ENCODE measurements at regions of chr1 and their contacts with region 1.

Region 1: DNA sequence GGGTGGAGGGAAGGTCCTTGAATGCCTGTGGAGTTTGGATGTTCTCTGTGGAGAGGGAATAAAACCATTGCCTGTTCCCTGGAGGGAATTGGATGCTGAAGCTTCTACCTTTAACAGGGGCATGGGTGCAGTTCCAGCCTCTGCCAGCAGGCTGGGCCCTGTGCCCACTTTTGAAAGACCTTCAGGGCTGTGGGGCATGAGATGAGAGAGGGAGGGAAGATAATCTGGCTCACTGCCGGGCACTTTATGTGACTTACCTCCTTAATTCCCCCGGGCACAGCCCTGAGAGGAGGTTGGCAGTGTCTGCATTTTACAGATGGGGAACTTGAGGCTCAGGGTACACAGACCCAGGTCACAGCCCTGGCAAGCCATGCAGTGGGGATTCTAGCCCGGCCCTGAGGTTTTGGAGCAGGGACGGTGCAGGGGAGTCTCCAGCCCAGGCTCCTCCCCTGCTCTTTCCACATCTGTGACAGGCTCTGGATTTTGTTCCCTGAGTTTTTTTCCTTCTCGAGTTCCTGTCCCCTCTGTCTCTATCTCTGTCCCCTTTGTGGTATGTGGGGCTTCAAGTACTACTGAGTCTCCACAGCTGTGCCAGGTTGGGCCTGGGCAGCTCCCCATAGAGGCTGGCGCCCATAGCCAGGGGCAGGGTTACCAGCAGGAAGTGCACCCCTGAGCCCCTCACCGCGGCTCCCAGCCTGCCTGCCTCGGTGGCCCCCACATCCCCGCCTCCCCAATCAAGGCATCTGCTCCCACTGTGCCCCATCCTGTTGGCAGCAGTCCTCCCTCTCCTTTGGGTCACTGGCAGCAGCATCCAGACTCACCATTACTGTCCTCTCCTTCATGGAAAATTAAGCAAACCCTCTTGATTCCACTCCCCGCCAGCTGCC is 14.0 kb upstream of the THEMIS2 start:
- DNase-seq: peak; percentile 69
- ATAC-seq: peak; percentile 86
- H3K4me3 ChIP-seq: peak overlapping the region; percentile 5 to 70 (median 42)
- H3K27ac ChIP-seq: no peak overlapping the region
- H3K4me1 ChIP-seq: peaks cover 35% of the 10 kb centered on the region
- H3K27me3 ChIP-seq: peaks cover 0 to 3% of the 10 kb centered on the region in 2 experiments; a peak in 1 of 5 replicates
- CTCF ChIP-seq: peak; percentile 96
- EP300 ChIP-seq: no peak; a peak in 1 of 4 replicates
- POLR2A ChIP-seq: no peak
- RAD21 ChIP-seq: peak; percentile 86

Region 2: DNA sequence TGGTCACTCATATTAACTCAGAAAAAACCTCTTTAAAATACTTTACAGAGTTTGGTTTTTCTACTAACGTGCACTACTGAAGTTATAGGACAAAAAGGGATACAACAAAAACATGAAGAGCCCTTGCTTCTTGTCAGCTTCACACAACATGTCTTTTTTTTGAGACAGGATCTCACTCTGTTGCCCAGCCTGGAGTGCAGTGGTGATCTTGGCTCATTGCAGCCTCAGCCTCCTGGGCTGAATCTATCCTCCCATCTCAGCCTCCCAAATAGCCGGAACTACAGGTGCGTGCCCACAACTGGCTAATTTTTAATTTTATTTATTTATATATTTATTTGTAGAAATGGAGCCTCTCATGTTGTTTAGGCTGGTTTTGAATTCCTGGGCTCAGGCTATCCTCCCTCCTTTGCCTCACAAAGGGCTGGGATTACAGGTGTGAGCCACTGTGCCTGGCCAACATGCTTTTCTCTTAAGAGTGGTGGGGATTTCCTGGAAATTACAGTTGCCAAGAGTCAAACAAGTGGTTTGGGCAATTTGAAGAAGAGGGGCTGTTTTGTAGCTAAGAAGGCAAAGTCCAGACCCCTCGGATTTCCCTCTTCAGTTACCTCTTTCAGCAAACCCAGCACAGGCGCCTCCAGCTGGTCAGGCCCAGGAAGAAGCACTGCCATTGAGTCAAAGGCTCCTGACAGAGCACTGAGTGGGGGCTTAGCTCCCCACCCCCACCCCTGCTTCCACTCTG is 70.1 kb after region 1 on chr1:
- CTCF ChIA-PET with region 1: no interaction called
- POLR2A ChIA-PET with region 1: no interaction called
- in situ Hi-C with region 1: loop called (anchors 10 kb)
- intact Hi-C with region 1: loop called (anchors 10 kb)
- DNase-seq: peak; percentile 37
- ATAC-seq: peak; percentile 31; the same call in 1 of the 3 replicates
- H3K4me3 ChIP-seq: peak overlapping the region in 1 of 3 experiments; percentile 16; a peak in 1 of 6 replicates
- H3K27ac ChIP-seq: no peak overlapping the region
- H3K4me1 ChIP-seq: peaks cover 20% of the 10 kb centered on the region
- H3K27me3 ChIP-seq: no peaks in the 10 kb centered on the region
- CTCF ChIP-seq: peak; percentile 58
- EP300 ChIP-seq: no peak
- POLR2A ChIP-seq: no peak
- RAD21 ChIP-seq: no peak

Region 3: DNA sequence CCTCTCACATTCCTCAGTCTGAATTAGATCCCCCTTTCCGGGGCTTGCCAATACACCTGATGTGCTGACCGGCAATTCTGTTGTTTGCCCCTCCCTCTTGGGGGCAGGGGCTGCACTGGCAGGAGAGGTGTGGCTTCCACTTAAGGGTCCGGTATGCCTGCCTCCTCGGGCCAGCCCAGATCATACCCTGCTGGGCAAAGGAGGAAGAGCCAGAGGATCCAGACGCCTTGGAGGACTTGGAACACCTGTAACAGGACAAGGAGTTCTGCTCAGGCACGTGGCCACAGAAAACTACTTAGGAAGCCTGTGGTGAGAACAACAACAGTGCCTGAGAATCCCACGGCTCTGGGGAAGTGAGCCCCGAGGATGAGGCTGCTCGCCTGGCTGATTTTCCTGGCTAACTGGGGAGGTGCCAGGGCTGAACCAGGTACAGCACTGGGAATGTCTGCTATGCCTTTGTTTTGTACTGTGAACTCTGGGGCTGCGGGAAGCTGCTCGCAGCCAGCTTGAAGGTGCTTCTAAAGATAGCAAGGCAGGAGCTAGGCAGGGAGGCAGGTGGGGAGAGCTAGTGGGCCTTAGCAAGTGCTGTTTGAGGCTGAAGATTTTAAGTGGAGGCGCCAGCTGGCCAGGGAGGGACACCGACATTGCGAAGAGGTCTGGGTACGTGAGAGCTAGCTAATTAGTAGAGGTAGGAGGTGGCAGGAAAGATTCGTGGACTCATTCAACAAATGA is 76.7 kb after region 1 on chr1 and contains the start of gene SMPDL3B:
- CTCF ChIA-PET with region 1: no interaction called
- POLR2A ChIA-PET with region 1: no interaction called
- in situ Hi-C with region 1: loop called (anchors 10 kb)
- intact Hi-C with region 1: no loop called
- DNase-seq: no peak
- ATAC-seq: peak; percentile 81
- H3K4me3 ChIP-seq: peak within 1 kb of the TSS; percentile 52 to 70 (median 52)
- H3K27ac ChIP-seq: no peak within 1 kb of the TSS
- H3K4me1 ChIP-seq: peaks cover 34% of the 10 kb centered on the region
- H3K27me3 ChIP-seq: no peaks in the 10 kb centered on the region
- CTCF ChIP-seq: 0 out of 2 replicates have a peak, but pooled peaks have one; percentile 9
- EP300 ChIP-seq: no peak
- POLR2A ChIP-seq: no peak
- RAD21 ChIP-seq: no peak
- total RNA-seq, gene SMPDL3B: 0.13 and 0.29 TPM in 2 replicates

Region 4: DNA sequence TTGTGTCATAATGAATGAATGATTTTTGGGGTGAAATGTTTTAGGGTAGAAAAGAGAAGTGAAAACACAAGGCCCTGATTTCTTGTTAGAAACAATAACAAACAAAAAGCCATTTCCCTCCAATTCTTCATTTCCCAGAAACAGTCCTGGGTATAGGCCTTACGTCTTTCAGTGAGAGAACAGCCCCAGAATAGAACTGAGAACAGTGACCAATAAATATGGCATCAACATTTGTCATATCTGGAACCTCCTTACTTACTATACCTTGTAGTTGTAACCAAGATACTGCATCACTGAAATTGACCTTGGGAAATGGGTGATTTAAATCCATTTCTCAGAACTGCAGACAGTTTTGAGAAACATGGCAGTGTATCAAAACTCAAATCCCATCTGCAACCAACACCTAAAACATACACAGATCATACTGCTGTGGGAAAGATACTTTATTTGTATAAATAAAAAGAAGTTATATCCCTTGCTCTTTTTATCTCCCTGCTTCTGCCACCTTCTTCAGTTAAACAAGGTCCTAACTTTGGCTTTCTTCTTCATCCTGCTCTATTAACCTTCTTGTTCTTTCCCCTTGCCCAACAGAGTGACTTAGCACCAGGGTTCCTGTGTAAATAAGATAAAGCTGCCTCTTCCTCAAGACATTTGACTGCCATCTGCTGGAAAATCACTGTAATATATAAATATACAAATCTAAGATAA is 121.0 kb after region 1 on chr1:
- CTCF ChIA-PET with region 1: interaction called, 13 read pairs
- POLR2A ChIA-PET with region 1: no interaction called
- in situ Hi-C with region 1: loop called (anchors 5 kb)
- intact Hi-C with region 1: no loop called
- DNase-seq: no peak
- ATAC-seq: no peak
- H3K4me3 ChIP-seq: no peak overlapping the region
- H3K27ac ChIP-seq: no peak overlapping the region
- H3K4me1 ChIP-seq: peaks cover 10% of the 10 kb centered on the region; the same call in 1 of the 2 replicates
- H3K27me3 ChIP-seq: no peaks in the 10 kb centered on the region
- CTCF ChIP-seq: peak; percentile 31; the same call in 1 of the 2 replicates
- EP300 ChIP-seq: no peak
- POLR2A ChIP-seq: no peak
- RAD21 ChIP-seq: 0 out of 2 replicates have a peak, but pooled peaks have one; percentile 23

Region 5: GRCh38 chr1:28021064-28021463 is 162.7 kb after region 1 on chr1:
- CTCF ChIA-PET with region 1: no interaction called
- POLR2A ChIA-PET with region 1: no interaction called
- in situ Hi-C with region 1: no loop called
- intact Hi-C with region 1: loop called (anchors 5 kb)
- DNase-seq: no peak
- ATAC-seq: no peak
- H3K4me3 ChIP-seq: no peak overlapping the region
- H3K27ac ChIP-seq: no peak overlapping the region
- H3K4me1 ChIP-seq: no peaks in the 10 kb centered on the region
- H3K27me3 ChIP-seq: no peaks in the 10 kb centered on the region
- CTCF ChIP-seq: no peak
- EP300 ChIP-seq: no peak
- POLR2A ChIP-seq: no peak
- RAD21 ChIP-seq: no peak

Region 6: DNA sequence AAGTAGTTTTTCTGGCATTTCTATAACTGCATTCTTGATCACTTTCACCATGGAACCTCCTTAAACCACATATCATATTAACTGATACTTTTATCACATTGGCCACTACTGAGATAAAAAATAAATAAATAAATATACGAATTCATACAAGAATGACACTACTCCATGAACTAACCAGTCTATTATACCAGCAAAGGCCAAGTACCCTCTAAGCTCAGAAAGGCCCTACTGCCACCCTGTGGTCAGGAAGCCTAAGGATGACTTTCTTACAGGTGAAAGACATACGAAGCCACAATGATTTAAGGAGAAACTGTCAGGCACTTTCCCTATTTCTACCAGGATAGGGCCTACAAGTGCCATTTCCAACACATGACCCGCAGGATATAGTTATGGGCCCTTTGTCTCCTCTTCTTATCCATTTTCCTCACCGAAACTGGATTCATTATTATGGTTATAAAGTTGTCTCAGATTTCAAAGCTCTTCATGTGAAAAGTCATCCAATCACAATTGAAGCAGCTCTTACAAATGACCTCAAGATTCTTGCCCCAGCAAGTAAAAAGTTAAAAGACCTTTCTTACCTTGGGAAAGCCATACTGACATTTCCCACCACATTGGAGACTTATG is 350.6 kb after region 1 on chr1:
- CTCF ChIA-PET with region 1: interaction called, 10 read pairs
- POLR2A ChIA-PET with region 1: no interaction called
- in situ Hi-C with region 1: loop called (anchors 10 kb)
- intact Hi-C with region 1: loop called (anchors 2 kb)
- DNase-seq: peak; percentile 58
- ATAC-seq: peak; percentile 72
- H3K4me3 ChIP-seq: no peak overlapping the region
- H3K27ac ChIP-seq: no peak overlapping the region
- H3K4me1 ChIP-seq: peaks cover 17% of the 10 kb centered on the region
- H3K27me3 ChIP-seq: no peaks in the 10 kb centered on the region
- CTCF ChIP-seq: peak; percentile 79
- EP300 ChIP-seq: no peak
- POLR2A ChIP-seq: no peak
- RAD21 ChIP-seq: peak; percentile 51; the same call in 1 of the 2 replicates